Mammary epithelial cell (primary cell): ENCODE measurements at regions of chr9 and their contacts with region 1.

Region 1: GRCh38 chr9:127586537-127586936 is 25.5 kb upstream of the STXBP1 start:
- DNase-seq: peak; percentile 56
- H3K4me3 ChIP-seq: no peak overlapping the region
- H3K27ac ChIP-seq: no peak overlapping the region
- H3K4me1 ChIP-seq: peaks cover 15% of the 10 kb centered on the region
- H3K27me3 ChIP-seq: no peaks in the 10 kb centered on the region
- CTCF ChIP-seq: peak; percentile 89 to 96

Region 2: DNA sequence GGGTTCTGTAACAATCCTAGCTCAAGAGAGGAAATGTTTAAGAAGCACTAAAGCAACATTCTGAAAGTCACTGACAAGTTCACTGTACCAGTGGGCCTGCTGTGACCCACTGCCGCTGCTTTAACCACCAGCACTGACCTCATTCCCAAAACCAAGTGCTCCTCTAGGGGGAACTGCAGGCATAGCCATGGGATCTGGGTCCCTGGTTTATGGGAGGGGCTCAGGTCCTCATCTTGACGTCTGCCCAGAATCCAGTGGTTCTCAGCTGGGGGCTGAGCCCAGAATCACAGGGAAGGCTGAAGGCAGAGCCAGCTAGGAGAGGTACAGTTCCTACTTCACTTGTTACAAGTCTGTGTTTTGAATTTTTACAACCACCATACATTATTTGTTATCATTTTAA is 225.7 kb before region 1 on chr9:
- CTCF ChIA-PET with region 1: interaction called, 6 read pairs
- dilution Hi-C with region 1: no loop called
- in situ Hi-C with region 1: no loop called
- intact Hi-C with region 1: loop called (anchors 1 kb)
- DNase-seq: peak; percentile 27
- H3K4me3 ChIP-seq: no peak overlapping the region
- H3K27ac ChIP-seq: peak overlapping the region; percentile 66
- H3K4me1 ChIP-seq: peaks cover 23% of the 10 kb centered on the region
- H3K27me3 ChIP-seq: no peaks in the 10 kb centered on the region
- CTCF ChIP-seq: peak; percentile 54 to 65

Region 3: GRCh38 chr9:127495906-127496421 is 90.6 kb before region 1 on chr9:
- CTCF ChIA-PET with region 1: no interaction called
- dilution Hi-C with region 1: no loop called
- in situ Hi-C with region 1: loop called in 1 of 2 experiments (anchors 5 kb)
- intact Hi-C with region 1: no loop called
- DNase-seq: no peak
- H3K4me3 ChIP-seq: no peak overlapping the region
- H3K27ac ChIP-seq: no peak overlapping the region
- H3K4me1 ChIP-seq: no peaks in the 10 kb centered on the region
- H3K27me3 ChIP-seq: no peaks in the 10 kb centered on the region
- CTCF ChIP-seq: no peak

Region 4: GRCh38 chr9:127525401-127526187 is 60.9 kb before region 1 on chr9:
- CTCF ChIA-PET with region 1: interaction called, 15 read pairs
- dilution Hi-C with region 1: no loop called
- in situ Hi-C with region 1: loop called (anchors 10 kb)
- intact Hi-C with region 1: loop called (anchors 1 kb)
- DNase-seq: no peak
- H3K4me3 ChIP-seq: no peak overlapping the region
- H3K27ac ChIP-seq: no peak overlapping the region
- H3K4me1 ChIP-seq: peaks cover 44% of the 10 kb centered on the region
- H3K27me3 ChIP-seq: no peaks in the 10 kb centered on the region
- CTCF ChIP-seq: peak; percentile 75 to 79

Region 5: DNA sequence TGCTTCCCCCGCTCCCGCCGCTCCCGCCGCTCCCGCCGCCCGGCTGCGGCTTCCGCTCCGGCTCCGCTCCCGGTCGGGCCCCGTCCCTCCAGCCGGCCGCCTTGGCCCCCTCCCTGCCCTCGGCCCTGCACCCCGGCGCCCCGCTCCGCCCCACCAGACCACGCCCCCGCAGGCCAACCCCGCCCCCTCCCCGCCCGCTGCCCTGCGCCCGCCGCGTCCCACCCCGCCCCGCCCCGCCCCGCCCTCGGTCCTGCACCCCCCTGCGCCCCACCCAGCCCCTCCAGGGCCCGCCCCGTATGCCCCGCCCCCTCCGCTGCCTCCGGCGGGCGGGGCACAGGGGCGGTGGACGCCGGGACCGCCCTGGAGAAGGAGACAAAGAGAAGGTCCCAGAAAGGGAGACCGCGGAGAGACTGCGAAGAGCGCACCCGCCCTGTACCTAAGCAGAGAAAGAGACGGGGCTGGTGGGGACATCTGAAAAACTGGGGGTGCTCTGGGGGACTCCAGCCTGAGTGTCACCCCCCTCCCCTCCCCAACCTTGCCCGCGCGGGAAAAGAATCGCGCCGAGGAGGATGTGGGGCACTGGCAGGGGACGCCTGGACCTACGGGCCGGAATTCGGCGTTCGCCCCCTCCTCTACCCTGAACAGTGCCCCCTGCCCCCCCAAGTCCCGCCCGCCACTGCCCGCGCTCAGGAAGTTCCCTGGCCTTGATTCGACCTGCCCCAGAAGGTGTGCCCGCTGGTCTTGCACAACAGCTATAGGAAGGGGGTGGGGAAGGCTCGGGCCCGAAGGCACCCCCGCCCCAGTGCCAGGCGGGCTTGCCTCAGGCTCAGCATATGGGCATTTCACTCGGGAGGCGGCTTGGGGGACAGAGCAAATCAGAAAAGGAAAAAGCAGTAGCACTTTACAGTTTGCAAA is 17.3 kb before region 1 on chr9:
- CTCF ChIA-PET with region 1: interaction called, 15 read pairs
- dilution Hi-C with region 1: no loop called
- in situ Hi-C with region 1: no loop called
- intact Hi-C with region 1: loop called (anchors 1 kb)
- DNase-seq: peak; percentile 80
- H3K4me3 ChIP-seq: peak overlapping the region; percentile 53 to 90 (median 73)
- H3K27ac ChIP-seq: peak overlapping the region; percentile 68
- H3K4me1 ChIP-seq: peaks cover 56% of the 10 kb centered on the region
- H3K27me3 ChIP-seq: no peaks in the 10 kb centered on the region
- CTCF ChIP-seq: no peak

Region 6: GRCh38 chr9:127785023-127785932 is 198.7 kb after region 1 on chr9:
- CTCF ChIA-PET with region 1: no interaction called
- dilution Hi-C with region 1: no loop called
- in situ Hi-C with region 1: no loop called
- intact Hi-C with region 1: loop called (anchors 1 kb)
- DNase-seq: peak; percentile 74
- H3K4me3 ChIP-seq: peak overlapping the region; percentile 47 to 94 (median 70)
- H3K27ac ChIP-seq: peak overlapping the region; percentile 43
- H3K4me1 ChIP-seq: peaks cover 18% of the 10 kb centered on the region
- H3K27me3 ChIP-seq: no peaks in the 10 kb centered on the region
- CTCF ChIP-seq: peak; percentile 35 to 84

Region 7: DNA sequence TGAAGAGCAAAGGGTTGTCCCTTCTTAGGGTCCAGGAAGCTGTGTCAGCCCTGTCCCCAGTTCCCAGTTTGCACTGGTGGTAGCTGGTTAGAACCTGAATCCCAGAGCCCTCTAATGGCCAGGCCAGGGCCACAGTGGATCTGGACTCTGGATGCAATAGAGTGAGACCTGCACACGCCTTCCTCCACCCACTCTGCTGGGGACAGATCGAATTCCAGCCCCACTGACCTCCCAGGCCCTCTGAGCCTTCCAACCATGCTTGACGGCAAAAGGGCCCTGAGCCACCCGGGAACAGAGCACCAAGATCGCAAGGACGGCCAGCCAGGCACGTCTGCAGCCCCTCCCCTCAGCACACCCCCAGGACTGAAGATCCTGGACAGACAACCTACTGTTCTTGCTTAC is 456.9 kb after region 1 on chr9:
- CTCF ChIA-PET with region 1: no interaction called
- dilution Hi-C with region 1: no loop called
- in situ Hi-C with region 1: loop called in 1 of 2 experiments (anchors 10 kb)
- intact Hi-C with region 1: no loop called
- DNase-seq: no peak
- H3K4me3 ChIP-seq: no peak overlapping the region
- H3K27ac ChIP-seq: no peak overlapping the region
- H3K4me1 ChIP-seq: no peaks in the 10 kb centered on the region
- H3K27me3 ChIP-seq: no peaks in the 10 kb centered on the region
- CTCF ChIP-seq: no peak